A673 (cell line): ENCODE measurements at regions of chr2 and their contacts with region 1.

Region 1: DNA sequence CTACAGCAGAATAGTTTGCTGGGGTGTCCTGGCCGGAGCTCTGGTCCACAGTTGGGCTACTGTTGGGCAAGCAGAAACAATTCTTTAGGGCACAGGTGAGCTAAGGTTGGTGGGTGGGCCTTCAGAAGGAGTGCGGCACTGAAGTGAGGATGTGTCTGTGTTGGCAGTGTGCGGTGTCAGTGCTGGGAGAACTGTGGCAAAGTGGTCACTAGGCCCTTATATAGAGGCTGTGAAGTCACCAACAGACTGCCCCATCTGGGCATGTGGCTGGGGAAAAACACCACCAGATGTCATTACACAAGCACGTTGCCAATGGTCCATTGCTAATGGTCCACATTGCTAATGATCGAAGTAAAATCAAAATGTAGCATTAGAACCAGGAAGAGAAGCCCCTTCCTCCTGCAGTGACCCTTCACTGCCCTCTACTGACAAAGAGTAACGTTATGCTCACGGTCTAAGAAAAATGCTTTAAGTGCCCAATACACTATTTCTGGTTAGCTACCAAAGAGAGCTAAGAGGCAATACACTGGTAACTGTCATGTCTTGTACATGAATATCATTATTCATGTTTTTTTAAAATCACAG is 21.3 kb downstream of the SCN1A start:
- DNase-seq: peak; percentile 65
- H3K4me3 ChIP-seq: no peak overlapping the region
- H3K27ac ChIP-seq: no peak overlapping the region
- H3K4me1 ChIP-seq: no peaks in the 10 kb centered on the region
- H3K27me3 ChIP-seq: no peaks in the 10 kb centered on the region
- CTCF ChIP-seq: peak; percentile 61

Region 2: GRCh38 chr2:165953655-165954606 is 152.6 kb before region 1 on chr2 and contains the start of gene TTC21B:
- CTCF ChIA-PET with region 1: no interaction called
- POLR2A ChIA-PET with region 1: no interaction called
- intact Hi-C with region 1: loop called (anchors 2 kb)
- DNase-seq: peak; percentile 99
- H3K4me3 ChIP-seq: peak within 1 kb of the TSS; percentile 68
- H3K27ac ChIP-seq: peak within 1 kb of the TSS; percentile 86
- H3K4me1 ChIP-seq: peaks cover 31% of the 10 kb centered on the region
- H3K27me3 ChIP-seq: no peaks in the 10 kb centered on the region
- CTCF ChIP-seq: peak; percentile 90
- total RNA-seq, gene TTC21B: 83.0 TPM in 2 replicates

Region 3: DNA sequence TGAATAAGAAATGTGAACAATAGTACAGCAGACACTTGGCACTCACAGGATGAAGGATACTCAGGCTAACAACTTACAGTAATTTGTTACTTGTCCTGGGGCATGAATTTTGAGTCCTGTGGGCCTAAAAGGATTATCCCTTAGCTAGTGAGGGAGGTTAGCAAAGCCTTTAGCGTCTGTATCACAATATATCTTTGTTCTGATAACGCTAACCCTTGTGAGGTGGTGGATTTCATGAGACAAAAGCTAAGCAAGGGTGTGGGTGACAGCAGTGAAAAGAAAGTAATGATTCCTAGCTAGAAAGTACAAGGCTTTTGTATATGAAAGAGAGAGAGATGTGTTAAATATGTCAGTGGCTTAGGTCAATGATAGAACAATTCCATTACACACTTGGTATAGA is 106.1 kb before region 1 on chr2:
- CTCF ChIA-PET with region 1: no interaction called
- POLR2A ChIA-PET with region 1: no interaction called
- intact Hi-C with region 1: no loop called
- DNase-seq: no peak
- H3K4me3 ChIP-seq: no peak overlapping the region
- H3K27ac ChIP-seq: no peak overlapping the region
- H3K4me1 ChIP-seq: no peaks in the 10 kb centered on the region
- H3K27me3 ChIP-seq: no peaks in the 10 kb centered on the region
- CTCF ChIP-seq: no peak